Right ventricle myocardium inferior (tissue), 1 donor: ENCODE measurements at regions of chr15 and their contacts with region 1.

Region 1: GRCh38 chr15:64717735-64718495 is 57.5 kb downstream of the RBPMS2 start:
- DNase-seq: no peak
- ATAC-seq: peak; percentile 51

Region 2: DNA sequence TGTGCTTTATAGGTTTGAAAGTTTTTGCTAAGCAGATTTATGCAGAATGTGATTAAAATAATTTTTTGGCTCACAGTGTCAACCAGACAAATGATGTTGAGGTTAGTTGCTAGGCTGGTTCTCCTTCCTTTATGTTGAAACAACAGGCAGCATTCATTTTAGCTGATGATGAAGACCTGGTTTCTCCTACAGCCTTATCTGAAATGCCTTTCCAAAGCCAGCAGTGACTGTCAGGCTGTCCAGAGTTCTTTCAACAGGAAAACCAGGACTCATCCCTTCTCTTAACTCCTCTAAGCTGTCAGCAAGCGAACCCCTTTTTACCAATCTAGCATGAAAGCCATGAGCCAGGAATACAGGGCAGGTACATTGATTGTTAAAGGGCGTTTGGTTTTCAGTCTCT is 173.5 kb before region 1 on chr15:
- intact Hi-C with region 1: no loop called
- DNase-seq: no peak
- ATAC-seq: no peak

Region 3: GRCh38 chr15:64702816-64703646 is 14.9 kb before region 1 on chr15:
- intact Hi-C with region 1: loop called (anchors 2 kb)
- DNase-seq: peak; percentile 100
- ATAC-seq: peak; percentile 94